GM10248 (cell line): ENCODE measurements at regions of chr15 and their contacts with region 1.

Region 1: DNA sequence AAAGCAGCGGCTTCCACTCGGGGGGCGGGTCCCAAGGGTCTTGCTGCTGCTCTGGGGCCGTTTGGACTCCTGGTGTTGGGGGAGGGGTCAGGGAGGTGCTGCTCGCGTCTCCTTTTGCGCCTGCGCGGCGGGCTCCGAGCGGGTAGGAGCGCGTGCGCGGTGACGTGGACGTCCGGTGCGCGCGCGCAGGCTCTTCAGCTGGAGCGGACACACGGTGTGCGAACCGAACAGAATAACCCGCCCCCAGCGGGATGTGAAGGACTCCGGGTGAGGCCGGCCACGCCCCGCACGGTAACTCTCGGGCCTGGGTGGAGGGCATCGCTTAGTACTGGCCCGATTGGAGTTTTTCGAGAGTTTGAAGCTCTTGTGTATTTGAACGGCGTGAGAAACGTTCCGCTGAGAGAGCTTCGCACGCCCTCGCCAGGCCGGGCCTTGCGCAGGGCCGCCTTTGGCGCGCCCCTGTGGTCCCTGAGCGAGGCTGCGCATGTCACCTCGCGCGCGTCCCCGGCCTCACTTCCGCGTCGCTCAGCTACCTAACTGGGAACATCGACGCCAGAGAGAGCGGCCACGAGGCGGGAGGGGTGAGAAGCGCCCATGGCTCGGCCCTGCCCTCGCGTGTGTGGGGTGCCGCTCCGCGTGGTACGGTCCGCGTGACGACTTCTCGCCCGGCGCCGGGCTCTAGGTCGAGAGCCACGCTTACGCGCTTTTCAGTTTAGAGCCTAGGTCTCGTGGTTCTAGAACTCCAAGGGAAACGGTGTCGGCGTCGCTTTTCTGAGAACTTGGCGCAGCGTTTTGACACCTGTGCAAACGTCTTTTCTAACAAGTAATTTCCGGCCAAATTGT is at the start of gene MGA:
- DNase-seq: peak; percentile 93
- CTCF ChIP-seq: peak; percentile 18

Region 2: DNA sequence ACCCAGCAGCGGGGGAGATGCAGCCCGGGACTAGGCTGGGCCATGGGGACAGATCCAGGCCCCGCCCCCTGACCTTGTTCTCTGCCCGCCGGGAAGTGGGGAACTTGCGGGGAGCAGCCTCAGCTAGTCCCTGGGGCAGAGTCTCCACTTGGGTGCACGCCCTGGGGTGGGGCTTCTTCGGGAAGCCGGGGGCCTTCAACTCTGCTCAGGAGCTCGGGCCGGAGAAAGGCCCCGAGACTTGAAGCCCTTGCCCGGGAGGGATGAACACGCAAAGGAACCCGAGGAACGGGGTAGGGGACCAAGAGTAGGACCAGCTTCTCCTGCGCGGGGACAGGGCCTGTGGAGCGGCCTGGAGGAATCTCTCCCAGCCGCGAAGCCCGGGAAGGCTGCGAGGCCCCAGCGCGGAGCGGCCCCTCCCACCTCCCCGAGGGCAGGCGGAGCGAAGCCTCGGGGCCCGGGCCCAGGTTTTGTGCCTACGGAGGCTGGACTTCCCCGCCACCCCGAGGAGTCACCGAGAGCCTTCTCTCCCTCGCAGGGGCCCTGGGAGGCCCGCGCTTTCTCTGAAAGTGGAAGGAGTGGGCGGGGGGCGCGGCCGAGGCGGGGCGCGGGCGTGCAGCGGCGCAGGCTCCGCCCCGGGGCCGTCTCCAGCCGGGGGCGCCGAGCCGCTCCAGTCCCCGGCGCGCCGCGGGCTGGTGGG is 167.1 kb before region 1 on chr15 and contains the start of gene ITPKA:
- CTCF ChIA-PET with region 1: no interaction called
- POLR2A ChIA-PET with region 1: interaction called, 11 read pairs
- DNase-seq: peak; percentile 95
- CTCF ChIP-seq: no peak

Region 3: DNA sequence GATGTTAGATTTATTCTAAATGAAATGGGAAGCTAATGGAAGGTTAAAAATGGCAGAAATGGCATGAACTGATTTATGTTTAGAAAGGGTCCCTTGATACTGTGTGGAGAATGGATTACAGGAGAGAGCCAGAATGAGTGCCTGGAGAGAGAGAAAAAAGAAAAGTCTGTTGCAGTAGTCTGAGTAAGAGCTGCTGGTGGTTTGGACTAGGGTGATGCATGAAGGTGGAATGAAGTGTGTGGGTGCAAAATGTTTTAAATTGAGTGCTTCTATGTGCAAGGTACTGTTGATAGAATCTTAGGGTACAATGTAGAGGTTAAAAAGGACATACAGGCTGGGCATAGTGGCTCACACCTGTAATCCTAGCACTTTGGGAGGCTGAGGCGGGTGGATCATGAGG is 11.7 kb before region 1 on chr15:
- CTCF ChIA-PET with region 1: no interaction called
- POLR2A ChIA-PET with region 1: no interaction called
- DNase-seq: no peak
- CTCF ChIP-seq: no peak

Region 4: DNA sequence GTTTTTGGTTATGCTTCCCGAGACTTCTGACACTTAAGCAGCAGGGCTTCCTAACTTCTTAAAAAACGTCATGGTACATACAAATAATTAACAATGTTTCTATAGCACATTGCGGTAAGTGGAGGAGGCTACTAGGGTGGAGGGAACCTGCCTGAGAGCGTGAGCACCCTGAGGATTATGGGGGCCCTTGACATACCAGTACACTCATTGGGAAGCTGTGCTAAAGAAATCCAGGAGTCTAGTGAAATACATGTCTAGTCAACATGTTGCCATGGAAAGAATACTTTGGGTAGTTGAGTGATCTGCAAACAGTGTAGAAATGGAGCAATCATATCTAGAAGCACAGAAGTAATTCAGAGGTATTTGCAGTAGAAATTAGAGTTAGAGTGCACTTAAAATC is 74.6 kb after region 1 on chr15:
- CTCF ChIA-PET with region 1: no interaction called
- POLR2A ChIA-PET with region 1: no interaction called
- DNase-seq: no peak
- CTCF ChIP-seq: no peak

Region 5: GRCh38 chr15:42056934-42057779 is 396.7 kb after region 1 on chr15:
- CTCF ChIA-PET with region 1: no interaction called
- POLR2A ChIA-PET with region 1: no interaction called
- DNase-seq: peak; percentile 82
- CTCF ChIP-seq: peak; percentile 71